ENCODE measurements at regions of chr10 and their contacts with region 1.

Region 1: DNA sequence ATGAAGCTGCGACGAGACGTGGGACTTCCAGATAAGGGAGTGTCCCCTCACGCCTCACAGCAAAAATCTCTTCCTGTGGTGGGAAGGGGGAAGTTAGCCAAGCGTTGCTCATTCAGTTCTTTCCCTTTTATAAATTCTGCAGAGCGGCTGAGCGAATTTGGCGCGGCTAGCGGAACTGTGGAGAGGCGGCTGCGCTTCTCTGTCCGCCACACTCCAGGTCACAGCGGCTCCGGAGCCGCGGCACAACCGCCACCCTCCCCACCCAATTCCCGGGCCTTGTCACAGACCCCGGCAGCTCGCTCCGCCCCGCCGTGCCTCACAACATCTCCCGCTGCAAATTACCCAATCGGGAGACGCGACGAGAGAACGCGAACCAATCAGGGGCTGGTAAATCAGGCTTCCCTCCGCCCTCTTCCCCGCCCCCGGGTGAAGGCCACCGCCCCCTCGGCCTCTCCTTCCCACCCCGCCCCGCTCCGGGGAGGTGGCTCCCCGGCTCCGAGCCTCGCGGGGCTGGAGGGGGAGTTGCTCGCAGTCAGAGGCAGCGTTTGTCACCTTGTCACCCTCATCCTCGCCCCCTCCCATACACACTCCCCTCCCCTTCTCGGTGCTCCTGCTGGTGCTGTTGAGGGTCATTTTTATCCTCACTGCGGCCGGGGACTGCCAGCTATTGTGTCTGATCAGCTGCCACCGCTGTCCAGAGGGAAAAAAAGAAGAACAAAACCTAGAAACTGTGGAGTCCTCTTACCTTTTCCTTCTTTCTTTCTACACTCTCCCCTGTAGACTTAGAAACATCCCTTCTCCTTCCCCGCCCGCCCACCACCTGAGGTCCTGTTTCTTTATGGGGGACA is 918 bp upstream of the ARHGAP21 start:
- DNase-seq: peak; percentile 98 to 100 (median 99)

Region 2: DNA sequence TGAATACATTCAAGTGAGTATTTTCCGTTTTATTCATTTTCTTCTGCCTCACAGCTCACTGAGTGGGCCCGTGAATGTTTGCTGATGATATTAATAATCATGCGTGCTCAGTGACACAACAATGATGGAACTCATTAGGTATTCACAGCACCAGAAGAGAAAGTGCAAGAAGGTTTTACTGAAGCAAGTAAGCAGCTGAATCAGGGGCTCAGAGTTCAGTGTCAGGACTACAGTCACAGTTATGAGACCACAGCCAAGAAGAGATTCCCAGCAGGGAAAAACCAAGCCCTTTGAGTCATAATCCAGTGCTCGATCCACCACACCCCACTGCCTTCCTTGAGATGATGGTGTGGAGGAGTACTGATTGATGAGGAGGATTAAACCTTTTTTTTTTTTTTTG is 268.3 kb before region 1 on chr10:
- intact Hi-C with region 1: no loop called
- DNase-seq: no peak

Region 3: GRCh38 chr10:24790599-24790998 is 66.0 kb after region 1 on chr10:
- intact Hi-C with region 1: loop called (anchors 2 kb)
- DNase-seq: peak in 9 of 10 donors; percentile 45 to 95 (median 63)

Region 4: DNA sequence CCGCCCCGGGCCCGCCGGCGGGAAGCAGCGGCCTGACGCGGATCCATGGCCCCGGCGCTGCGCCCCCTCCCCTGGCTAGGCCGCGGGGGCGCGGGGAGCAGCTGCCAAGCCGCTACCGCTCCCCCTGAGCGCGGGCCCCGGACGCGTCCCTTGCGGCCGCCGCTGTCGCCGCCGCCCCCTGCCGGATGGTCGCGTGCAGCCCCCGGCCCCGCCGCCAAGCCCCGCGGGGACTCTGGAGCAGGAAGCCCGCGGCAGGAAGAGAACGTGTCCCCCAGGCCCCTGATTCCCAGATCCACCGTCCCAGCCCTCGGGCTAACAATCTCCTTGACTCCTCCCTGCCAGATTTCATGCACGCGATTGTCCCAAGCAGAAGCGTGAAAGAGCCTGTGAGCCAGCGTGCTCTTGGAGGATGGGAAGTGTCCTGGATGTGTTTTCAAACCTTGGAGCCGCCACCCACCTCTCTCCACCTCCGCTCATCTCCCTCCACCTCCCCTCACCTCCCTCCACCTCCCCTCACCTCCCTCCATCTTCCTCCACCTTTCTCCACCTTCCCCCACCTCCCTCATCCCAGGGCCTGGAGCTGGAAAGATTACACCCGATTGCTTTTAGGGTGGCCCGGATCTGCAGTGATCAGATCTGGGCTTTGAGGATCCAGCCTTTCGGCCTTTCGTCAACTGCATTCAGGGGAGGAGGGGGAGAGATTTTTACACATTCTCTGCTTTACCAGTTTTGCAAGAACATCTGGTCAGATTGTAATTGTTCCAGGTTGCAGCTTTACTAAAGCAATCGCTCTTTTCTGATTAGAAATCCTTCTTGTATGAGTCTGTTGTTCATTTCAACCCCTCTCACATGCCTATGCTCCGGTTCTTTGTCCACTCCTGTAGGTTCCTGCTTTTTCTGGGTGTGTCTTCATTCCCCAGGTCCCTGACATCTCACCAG is 228.4 kb after region 1 on chr10:
- intact Hi-C with region 1: loop called (anchors 1 kb)
- DNase-seq: peak; percentile 29 to 91 (median 48)

Region 5: DNA sequence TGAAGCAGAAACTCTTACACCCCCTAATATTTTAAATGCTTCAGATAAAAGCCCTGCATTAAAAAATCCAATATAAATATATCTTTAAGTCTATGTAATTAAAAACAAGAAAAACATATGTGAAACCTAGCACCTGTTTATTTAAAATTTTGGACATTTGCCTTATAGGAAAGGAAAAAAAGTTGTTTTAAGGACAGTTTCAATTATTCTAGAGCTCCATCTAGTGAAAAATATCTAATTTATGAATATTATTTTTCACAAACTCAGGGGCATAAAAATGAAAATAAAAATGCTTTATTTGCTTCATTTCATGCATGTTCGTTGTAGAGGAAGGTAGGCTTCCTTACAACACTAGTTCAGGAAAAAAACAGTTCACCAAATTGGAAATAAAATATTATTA is 265.3 kb after region 1 on chr10:
- intact Hi-C with region 1: loop called (anchors 10 kb)
- DNase-seq: no peak

Region 6: DNA sequence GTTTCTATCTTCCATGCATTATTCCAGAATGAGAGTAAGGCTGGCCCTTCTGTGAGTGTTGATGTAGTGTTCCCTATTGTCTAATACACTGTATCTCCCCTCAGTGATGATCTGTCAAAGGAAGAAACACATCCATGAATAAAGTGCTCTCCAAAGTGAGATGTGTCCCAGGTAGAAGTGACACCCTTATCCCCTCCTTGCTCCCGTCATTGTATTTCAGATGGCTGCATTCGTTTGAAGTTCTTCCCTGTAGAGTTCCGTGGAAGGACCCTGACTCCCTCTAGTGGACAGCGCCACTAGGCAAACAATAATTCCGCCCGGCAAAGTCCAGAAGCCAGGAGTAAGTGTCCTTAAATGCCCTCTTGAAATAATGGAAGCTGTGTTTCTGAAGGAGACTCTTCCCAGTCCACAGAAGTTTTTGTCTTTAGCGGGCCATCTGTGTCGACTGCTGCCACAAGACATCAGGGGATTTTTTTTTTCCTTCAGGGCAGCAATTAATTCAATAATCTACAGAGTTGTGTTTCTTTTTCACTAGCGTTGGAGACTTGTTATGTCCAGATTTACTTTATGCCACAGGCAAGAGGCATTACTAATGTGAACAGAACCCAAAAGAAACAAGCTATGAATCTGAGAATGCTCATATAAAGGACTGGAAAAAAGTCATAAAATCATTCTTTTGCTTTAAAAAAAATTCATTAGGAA is 356.4 kb after region 1 on chr10:
- intact Hi-C with region 1: loop called (anchors 10 kb)
- DNase-seq: peak; percentile 66 to 97 (median 86)

Measured in posterior cingulate gyrus (tissue), 11 donors.